Gastrocnemius medialis (tissue), 4 donors: ENCODE measurements at regions of chr11 and their contacts with region 1.

Region 1: GRCh38 chr11:66311965-66312548 is 4.8 kb downstream of the CD248 start:
- DNase-seq: peak; percentile 86 to 88
- ATAC-seq: peak; percentile 80 to 82
- H3K4me3 ChIP-seq: peak overlapping the region; percentile 68 to 79 (median 72)
- H3K27ac ChIP-seq: peak overlapping the region; percentile 72 to 84 (median 80)
- H3K4me1 ChIP-seq: no peaks in the 10 kb centered on the region
- H3K27me3 ChIP-seq: peaks cover 5 to 14% (median 12%) of the 10 kb centered on the region in 3 donors
- CTCF ChIP-seq: peak in 4 of 5 experiments; percentile 89 to 96 (median 92)
- POLR2A ChIP-seq: peak; percentile 28 to 68

Region 2: DNA sequence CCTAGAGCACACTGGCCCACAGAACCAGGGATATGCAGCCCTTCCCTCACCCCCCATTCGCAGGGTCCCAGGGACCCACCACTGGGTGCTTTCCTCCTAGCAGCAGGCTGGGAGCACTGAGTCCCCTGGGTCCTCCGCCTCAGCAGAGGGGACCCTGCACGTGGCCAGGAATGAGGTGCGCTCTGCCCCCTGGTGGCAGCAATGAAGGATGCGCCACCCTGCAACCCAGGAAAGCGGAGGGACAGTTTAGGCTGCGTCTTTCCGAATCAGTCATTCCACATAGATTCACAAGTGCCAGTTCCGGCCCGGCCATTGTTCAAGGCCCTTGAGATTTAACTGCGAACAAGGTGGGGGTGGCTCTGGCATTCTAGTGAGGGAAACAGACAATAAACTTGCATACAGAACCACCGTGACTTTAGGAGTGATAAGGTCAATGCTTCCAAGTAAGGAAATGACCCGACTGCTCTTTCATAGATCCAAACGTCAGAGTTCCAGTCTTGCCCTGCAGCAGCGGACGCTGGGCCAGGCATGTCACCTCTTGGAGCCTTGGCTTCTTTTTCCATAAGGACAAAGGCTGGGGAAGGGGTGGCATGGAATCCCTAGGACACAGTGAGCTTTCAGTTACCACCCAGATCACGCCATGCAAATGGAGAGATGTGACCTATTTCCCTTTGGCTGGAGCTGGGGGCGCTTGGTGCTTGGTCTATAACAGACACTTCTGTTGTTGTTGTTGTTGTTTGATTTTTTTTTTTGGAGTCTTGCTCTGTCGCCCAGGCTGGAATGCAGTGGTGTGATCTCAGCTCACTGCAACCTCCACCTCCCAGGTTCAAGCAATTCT is 16.5 kb after region 1 on chr11:
- in situ Hi-C with region 1: no loop called
- intact Hi-C with region 1: loop called (anchors 1 kb)
- DNase-seq: peak in 1 of 2 donors; percentile 54
- ATAC-seq: peak; percentile 65 to 76
- H3K4me3 ChIP-seq: peak overlapping the region in 1 of 4 donors; percentile 26
- H3K27ac ChIP-seq: peak overlapping the region in 3 of 4 donors; percentile 8 to 59 (median 21)
- H3K4me1 ChIP-seq: peaks cover 9 to 20% of the 10 kb centered on the region in 2 donors
- H3K27me3 ChIP-seq: no peaks in the 10 kb centered on the region
- CTCF ChIP-seq: peak; percentile 81 to 96 (median 93)
- POLR2A ChIP-seq: no peak